ENCODE measurements at regions of chr6 and their contacts with region 1.

Region 1: GRCh38 chr6:46848684-46849360 is 55.6 kb downstream of the MEP1A start:
- DNase-seq: peak; percentile 94
- ATAC-seq: peak; percentile 93
- H3K4me3 ChIP-seq: peak overlapping the region; percentile 46; the same call in 1 of the 2 replicates
- H3K27ac ChIP-seq: peak overlapping the region; percentile 70
- H3K4me1 ChIP-seq: peaks cover 32% of the 10 kb centered on the region
- H3K27me3 ChIP-seq: no peaks in the 10 kb centered on the region
- CTCF ChIP-seq: peak; percentile 97

Region 2: DNA sequence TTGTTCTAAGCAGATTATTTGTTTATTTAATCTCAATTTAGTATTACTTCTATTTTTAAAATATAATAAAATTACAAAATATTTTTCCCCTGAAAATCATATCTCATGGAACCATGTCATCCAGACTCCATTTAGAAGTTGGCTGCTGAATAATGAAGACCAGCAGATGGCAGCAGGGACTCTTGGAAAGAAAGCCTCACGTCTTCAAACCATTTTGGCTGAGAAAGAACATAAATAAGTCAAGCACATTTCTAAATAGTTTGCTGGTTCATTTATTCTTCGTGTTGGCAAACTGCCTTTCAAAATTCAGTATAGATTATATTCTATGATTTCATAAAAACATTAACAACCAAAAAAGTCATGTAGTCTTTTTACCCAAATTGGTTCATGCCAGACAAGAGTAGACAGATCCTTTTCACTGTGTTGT is 429.2 kb before region 1 on chr6:
- CTCF ChIA-PET with region 1: no interaction called
- POLR2A ChIA-PET with region 1: no interaction called
- intact Hi-C with region 1: loop called (anchors 5 kb)
- DNase-seq: peak; percentile 83
- ATAC-seq: 0 out of 2 replicates have a peak, but pooled peaks have one; percentile 43
- H3K4me3 ChIP-seq: no peak overlapping the region
- H3K27ac ChIP-seq: no peak overlapping the region
- H3K4me1 ChIP-seq: peaks cover 8% of the 10 kb centered on the region
- H3K27me3 ChIP-seq: peaks cover 6% of the 10 kb centered on the region; the same call in 1 of the 2 replicates
- CTCF ChIP-seq: peak; percentile 76

Region 3: DNA sequence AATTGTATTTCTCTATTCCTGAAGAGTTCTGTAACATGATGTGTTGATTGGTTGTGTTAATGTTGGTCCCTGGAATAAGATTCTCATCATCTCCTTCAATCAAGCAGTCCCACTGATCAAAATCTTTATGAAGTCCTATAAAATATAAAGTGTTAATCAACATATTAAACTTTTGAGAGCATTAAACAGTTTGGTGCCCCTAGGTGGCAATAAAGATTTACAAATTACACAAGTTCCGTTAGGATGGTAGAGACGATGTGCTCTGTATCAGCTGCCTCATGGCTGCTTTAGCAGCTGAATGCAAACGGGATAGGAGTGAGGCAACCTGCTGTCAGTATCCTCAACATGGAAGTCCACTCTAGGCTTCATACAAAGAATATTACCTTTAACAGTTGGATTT is 144.3 kb before region 1 on chr6:
- CTCF ChIA-PET with region 1: interaction called, 9 read pairs
- POLR2A ChIA-PET with region 1: no interaction called
- intact Hi-C with region 1: loop called (anchors 1 kb)
- DNase-seq: peak; percentile 80
- ATAC-seq: peak; percentile 90
- H3K4me3 ChIP-seq: no peak overlapping the region
- H3K27ac ChIP-seq: no peak overlapping the region
- H3K4me1 ChIP-seq: peaks cover 10% of the 10 kb centered on the region
- H3K27me3 ChIP-seq: no peaks in the 10 kb centered on the region
- CTCF ChIP-seq: peak; percentile 76

Region 4: GRCh38 chr6:46893648-46894047 is 44.8 kb after region 1 on chr6:
- CTCF ChIA-PET with region 1: no interaction called
- POLR2A ChIA-PET with region 1: no interaction called
- intact Hi-C with region 1: loop called (anchors 5 kb)
- DNase-seq: peak; percentile 48
- ATAC-seq: peak; percentile 38
- H3K4me3 ChIP-seq: no peak overlapping the region
- H3K27ac ChIP-seq: 0 out of 2 replicates have a peak overlapping the region, but pooled peaks have one; percentile 12
- H3K4me1 ChIP-seq: peaks cover 25% of the 10 kb centered on the region
- H3K27me3 ChIP-seq: no peaks in the 10 kb centered on the region
- CTCF ChIP-seq: no peak

Region 5: GRCh38 chr6:46914279-46914810 is 65.5 kb after region 1 on chr6:
- CTCF ChIA-PET with region 1: no interaction called
- POLR2A ChIA-PET with region 1: no interaction called
- intact Hi-C with region 1: loop called (anchors 1 kb)
- DNase-seq: peak; percentile 65
- ATAC-seq: peak; percentile 86
- H3K4me3 ChIP-seq: no peak overlapping the region
- H3K27ac ChIP-seq: peak overlapping the region; percentile 31
- H3K4me1 ChIP-seq: peaks cover 17% of the 10 kb centered on the region
- H3K27me3 ChIP-seq: no peaks in the 10 kb centered on the region
- CTCF ChIP-seq: no peak

Region 6: GRCh38 chr6:46925563-46926253 is 76.9 kb after region 1 on chr6:
- CTCF ChIA-PET with region 1: no interaction called
- POLR2A ChIA-PET with region 1: interaction called, 3 read pairs
- intact Hi-C with region 1: loop called (anchors 5 kb)
- DNase-seq: peak; percentile 91
- ATAC-seq: peak; percentile 80
- H3K4me3 ChIP-seq: peak overlapping the region; percentile 14; the same call in 1 of the 2 replicates
- H3K27ac ChIP-seq: peak overlapping the region; percentile 97
- H3K4me1 ChIP-seq: peaks cover 42% of the 10 kb centered on the region
- H3K27me3 ChIP-seq: no peaks in the 10 kb centered on the region
- CTCF ChIP-seq: no peak

Region 7: GRCh38 chr6:46983007-46983411 is 134.2 kb after region 1 on chr6:
- CTCF ChIA-PET with region 1: interaction called, 4 read pairs
- POLR2A ChIA-PET with region 1: no interaction called
- intact Hi-C with region 1: loop called (anchors 2 kb)
- DNase-seq: peak; percentile 98
- ATAC-seq: peak; percentile 86
- H3K4me3 ChIP-seq: no peak overlapping the region
- H3K27ac ChIP-seq: peak overlapping the region; percentile 91
- H3K4me1 ChIP-seq: peaks cover 62% of the 10 kb centered on the region
- H3K27me3 ChIP-seq: no peaks in the 10 kb centered on the region
- CTCF ChIP-seq: peak; percentile 54

Region 8: GRCh38 chr6:47073125-47074110 is 224.6 kb after region 1 on chr6:
- CTCF ChIA-PET with region 1: no interaction called
- POLR2A ChIA-PET with region 1: no interaction called
- intact Hi-C with region 1: no loop called
- DNase-seq: peak; percentile 41
- ATAC-seq: no peak; the same call in 1 of the 2 replicates
- H3K4me3 ChIP-seq: no peak overlapping the region
- H3K27ac ChIP-seq: no peak overlapping the region
- H3K4me1 ChIP-seq: peaks cover 14% of the 10 kb centered on the region; the same call in 1 of the 2 replicates
- H3K27me3 ChIP-seq: no peaks in the 10 kb centered on the region
- CTCF ChIP-seq: peak; percentile 69

Region 9: GRCh38 chr6:47188588-47189021 is 339.8 kb after region 1 on chr6:
- CTCF ChIA-PET with region 1: no interaction called
- POLR2A ChIA-PET with region 1: no interaction called
- intact Hi-C with region 1: no loop called
- DNase-seq: peak; percentile 97
- ATAC-seq: peak; percentile 91
- H3K4me3 ChIP-seq: 0 out of 2 replicates have a peak overlapping the region, but pooled peaks have one; percentile 25
- H3K27ac ChIP-seq: peak overlapping the region; percentile 82
- H3K4me1 ChIP-seq: peaks cover 33% of the 10 kb centered on the region
- H3K27me3 ChIP-seq: no peaks in the 10 kb centered on the region
- CTCF ChIP-seq: no peak